HepG2 (cell line): ENCODE measurements at regions of chr5 and their contacts with region 1.

Region 1: GRCh38 chr5:28344803-28345433 is 1306.5 kb upstream of the CDH9 start:
- DNase-seq: peak; percentile 35
- ATAC-seq: peak; percentile 77
- H3K4me3 ChIP-seq: no peak overlapping the region
- H3K27ac ChIP-seq: no peak overlapping the region
- H3K4me1 ChIP-seq: no peaks in the 10 kb centered on the region
- H3K27me3 ChIP-seq: no peaks in the 10 kb centered on the region; a peak in 1 of 5 replicates
- CTCF ChIP-seq: peak; percentile 63
- EP300 ChIP-seq: no peak
- POLR2A ChIP-seq: no peak
- RAD21 ChIP-seq: no peak

Region 2: DNA sequence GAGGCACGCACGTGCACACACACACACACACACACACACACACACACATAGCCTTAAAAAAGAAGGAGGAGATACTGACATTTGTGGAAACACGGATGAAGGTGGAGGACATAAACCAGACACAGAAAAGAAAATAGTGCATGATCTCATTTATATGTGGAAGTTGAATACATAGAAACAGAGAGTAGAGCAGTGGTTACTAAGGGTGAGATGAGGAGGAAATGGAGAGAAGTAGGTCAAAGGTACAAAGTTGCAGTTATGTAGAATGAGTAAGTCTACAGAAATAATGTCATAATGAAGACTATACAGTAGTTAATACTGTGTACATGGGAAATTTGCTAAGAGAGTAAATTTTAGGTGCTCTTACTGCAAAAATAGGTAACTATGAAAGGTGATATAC is 894.3 kb before region 1 on chr5:
- CTCF ChIA-PET with region 1: no interaction called
- POLR2A ChIA-PET with region 1: no interaction called
- in situ Hi-C with region 1: no loop called
- intact Hi-C with region 1: no loop called
- DNase-seq: no peak
- ATAC-seq: no peak
- H3K4me3 ChIP-seq: no peak overlapping the region
- H3K27ac ChIP-seq: no peak overlapping the region
- H3K4me1 ChIP-seq: no peaks in the 10 kb centered on the region
- H3K27me3 ChIP-seq: no peaks in the 10 kb centered on the region
- CTCF ChIP-seq: no peak
- EP300 ChIP-seq: no peak
- POLR2A ChIP-seq: no peak
- RAD21 ChIP-seq: no peak

Region 3: GRCh38 chr5:28328681-28329080 is 16.2 kb before region 1 on chr5:
- CTCF ChIA-PET with region 1: no interaction called
- POLR2A ChIA-PET with region 1: no interaction called
- in situ Hi-C with region 1: no loop called
- intact Hi-C with region 1: no loop called
- DNase-seq: no peak
- ATAC-seq: no peak
- H3K4me3 ChIP-seq: no peak overlapping the region
- H3K27ac ChIP-seq: no peak overlapping the region
- H3K4me1 ChIP-seq: no peaks in the 10 kb centered on the region
- H3K27me3 ChIP-seq: no peaks in the 10 kb centered on the region
- CTCF ChIP-seq: no peak
- EP300 ChIP-seq: no peak
- POLR2A ChIP-seq: no peak
- RAD21 ChIP-seq: no peak

Region 4: GRCh38 chr5:28374492-28374934 is 29.6 kb after region 1 on chr5:
- CTCF ChIA-PET with region 1: no interaction called
- POLR2A ChIA-PET with region 1: no interaction called
- in situ Hi-C with region 1: no loop called
- intact Hi-C with region 1: no loop called
- DNase-seq: no peak
- ATAC-seq: no peak
- H3K4me3 ChIP-seq: no peak overlapping the region
- H3K27ac ChIP-seq: no peak overlapping the region
- H3K4me1 ChIP-seq: no peaks in the 10 kb centered on the region
- H3K27me3 ChIP-seq: no peaks in the 10 kb centered on the region
- CTCF ChIP-seq: no peak
- EP300 ChIP-seq: no peak
- POLR2A ChIP-seq: no peak
- RAD21 ChIP-seq: no peak

Region 5: DNA sequence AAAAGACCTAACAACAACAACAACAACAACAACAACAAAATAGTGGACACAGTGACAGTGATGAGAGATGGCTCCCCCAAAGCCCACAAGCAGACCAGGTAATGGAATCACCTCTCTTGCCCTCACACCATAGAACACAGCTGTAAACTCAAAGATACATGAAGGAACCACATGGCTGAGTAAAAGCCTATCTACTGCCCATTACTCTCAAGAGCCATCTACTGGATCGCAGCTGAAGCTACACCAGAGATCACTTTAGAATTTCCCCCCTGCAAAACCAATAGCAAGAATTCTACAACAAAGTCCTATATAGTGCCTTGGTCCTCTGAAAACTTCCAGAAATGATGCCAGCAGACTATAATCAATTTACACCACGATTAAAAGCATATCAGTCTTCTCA is 231.1 kb after region 1 on chr5:
- CTCF ChIA-PET with region 1: no interaction called
- POLR2A ChIA-PET with region 1: no interaction called
- in situ Hi-C with region 1: no loop called
- intact Hi-C with region 1: loop called (anchors 5 kb)
- DNase-seq: peak; percentile 5
- ATAC-seq: 0 out of 3 replicates have a peak, but pooled peaks have one; percentile 28
- H3K4me3 ChIP-seq: no peak overlapping the region
- H3K27ac ChIP-seq: no peak overlapping the region
- H3K4me1 ChIP-seq: no peaks in the 10 kb centered on the region
- H3K27me3 ChIP-seq: no peaks in the 10 kb centered on the region
- CTCF ChIP-seq: no peak
- EP300 ChIP-seq: no peak
- POLR2A ChIP-seq: no peak
- RAD21 ChIP-seq: no peak

Region 6: GRCh38 chr5:28766565-28767158 is 421.7 kb after region 1 on chr5:
- CTCF ChIA-PET with region 1: interaction called, 10 read pairs
- POLR2A ChIA-PET with region 1: no interaction called
- in situ Hi-C with region 1: loop called (anchors 10 kb)
- intact Hi-C with region 1: loop called (anchors 1 kb)
- DNase-seq: peak; percentile 18
- ATAC-seq: no peak
- H3K4me3 ChIP-seq: no peak overlapping the region
- H3K27ac ChIP-seq: no peak overlapping the region
- H3K4me1 ChIP-seq: no peaks in the 10 kb centered on the region
- H3K27me3 ChIP-seq: no peaks in the 10 kb centered on the region
- CTCF ChIP-seq: peak; percentile 28
- EP300 ChIP-seq: no peak
- POLR2A ChIP-seq: no peak
- RAD21 ChIP-seq: no peak

Region 7: DNA sequence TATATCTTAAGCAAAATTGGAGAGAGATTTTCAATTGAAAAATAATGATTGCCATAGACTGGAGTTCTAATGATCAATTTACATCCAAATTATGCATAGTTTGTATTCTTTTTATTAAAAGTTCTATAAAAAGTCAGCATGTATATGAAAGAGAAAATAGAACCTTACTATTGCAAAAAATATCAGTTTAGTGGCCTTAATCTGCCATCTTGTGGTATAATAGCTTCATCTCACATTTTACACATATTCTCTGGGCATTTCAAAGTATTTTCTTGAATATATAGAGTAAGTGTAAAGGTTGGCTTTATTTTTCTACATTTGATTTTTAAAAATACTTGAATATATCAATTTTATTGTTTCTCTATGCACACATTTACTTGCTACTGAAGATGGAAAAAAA is 552.0 kb after region 1 on chr5:
- CTCF ChIA-PET with region 1: interaction called, 6 read pairs
- POLR2A ChIA-PET with region 1: no interaction called
- in situ Hi-C with region 1: no loop called
- intact Hi-C with region 1: loop called (anchors 2 kb)
- DNase-seq: peak; percentile 1
- ATAC-seq: no peak
- H3K4me3 ChIP-seq: no peak overlapping the region
- H3K27ac ChIP-seq: no peak overlapping the region
- H3K4me1 ChIP-seq: no peaks in the 10 kb centered on the region
- H3K27me3 ChIP-seq: no peaks in the 10 kb centered on the region
- CTCF ChIP-seq: no peak
- EP300 ChIP-seq: no peak
- POLR2A ChIP-seq: no peak
- RAD21 ChIP-seq: no peak